ENCODE measurements at regions of chr12 and their contacts with region 1.

Region 1: GRCh38 chr12:52004042-52004648 is 2.6 kb upstream of the TAMALIN start:
- DNase-seq: no peak
- ATAC-seq: no peak
- H3K4me3 Mint-ChIP-seq: no peak overlapping the region
- H3K27ac Mint-ChIP-seq: no peak overlapping the region
- H3K4me1 Mint-ChIP-seq: peaks cover 39% of the 10 kb centered on the region
- H3K27me3 Mint-ChIP-seq: no peaks in the 10 kb centered on the region
- CTCF ChIP-seq: no peak

Region 2: DNA sequence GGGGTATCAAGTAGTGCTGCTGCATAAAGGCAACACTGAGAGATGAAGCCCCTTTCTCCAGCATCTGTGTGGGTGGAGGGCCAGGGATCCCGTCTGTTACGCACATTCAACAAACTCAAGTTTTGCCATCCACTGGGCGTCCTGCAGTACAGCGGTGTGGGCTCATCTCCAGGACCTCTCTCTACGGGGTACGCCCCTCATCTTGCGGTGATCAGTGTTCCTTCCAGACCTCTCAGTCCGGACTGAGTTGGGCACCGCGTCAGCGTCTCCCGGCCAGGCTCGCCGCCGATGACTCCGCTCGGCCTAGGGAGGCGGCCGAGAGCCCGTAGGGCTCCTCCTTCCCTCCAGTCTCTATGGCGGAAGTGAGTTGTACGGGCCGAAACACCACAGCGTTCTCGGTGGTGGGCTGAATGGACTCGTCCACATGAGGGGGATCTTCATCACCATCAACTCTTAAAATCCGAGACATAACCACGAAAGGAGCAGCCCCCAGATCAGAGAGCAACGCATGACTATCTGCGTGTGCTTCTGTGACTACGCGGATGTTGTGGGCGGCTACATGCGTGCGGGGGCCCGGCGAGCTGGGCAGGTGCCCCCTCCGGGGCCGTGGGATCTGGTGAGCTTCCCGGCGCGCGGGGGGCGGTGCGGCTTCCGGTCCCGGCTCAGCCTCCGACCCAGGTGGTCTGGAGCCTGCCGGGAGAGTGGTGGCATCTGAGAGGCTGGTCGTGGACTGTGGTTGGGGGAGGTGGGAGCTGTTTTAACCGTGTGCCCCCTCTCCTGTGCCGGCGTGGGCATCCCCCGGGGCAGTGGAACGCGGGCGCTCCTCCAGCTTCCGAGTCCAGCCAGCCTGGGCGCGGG is 65.4 kb after region 1 on chr12 and contains the start of gene ATG101:
- CTCF ChIA-PET with region 1: no interaction called
- POLR2A ChIA-PET with region 1: interaction called, 14 read pairs
- intact Hi-C with region 1: no loop called
- DNase-seq: peak; percentile 87
- ATAC-seq: peak; percentile 94
- H3K4me3 Mint-ChIP-seq: peak within 1 kb of the TSS; percentile 87
- H3K27ac Mint-ChIP-seq: peak within 1 kb of the TSS; percentile 96
- H3K4me1 Mint-ChIP-seq: peaks cover 47% of the 10 kb centered on the region
- H3K27me3 Mint-ChIP-seq: no peaks in the 10 kb centered on the region
- CTCF ChIP-seq: peak; percentile 31
- total RNA-seq, gene ATG101: 25.6 and 32.5 TPM in 2 replicates